OCI-LY7 (cell line): ENCODE measurements at regions of chr18 and their contacts with region 1.

Region 1: GRCh38 chr18:42298759-42299675 is 344.0 kb downstream of the PIK3C3 start:
- DNase-seq: peak; percentile 37
- H3K4me3 ChIP-seq: no peak overlapping the region
- H3K27ac ChIP-seq: no peak overlapping the region
- H3K4me1 ChIP-seq: no peaks in the 10 kb centered on the region
- CTCF ChIP-seq: peak; percentile 79

Region 2: GRCh38 chr18:42114310-42114943 is 184.6 kb before region 1 on chr18:
- CTCF ChIA-PET with region 1: no interaction called
- POLR2A ChIA-PET with region 1: no interaction called
- intact Hi-C with region 1: loop called (anchors 10 kb)
- DNase-seq: peak; percentile 46
- H3K4me3 ChIP-seq: no peak overlapping the region
- H3K27ac ChIP-seq: no peak overlapping the region
- H3K4me1 ChIP-seq: no peaks in the 10 kb centered on the region
- CTCF ChIP-seq: peak; percentile 79

Region 3: DNA sequence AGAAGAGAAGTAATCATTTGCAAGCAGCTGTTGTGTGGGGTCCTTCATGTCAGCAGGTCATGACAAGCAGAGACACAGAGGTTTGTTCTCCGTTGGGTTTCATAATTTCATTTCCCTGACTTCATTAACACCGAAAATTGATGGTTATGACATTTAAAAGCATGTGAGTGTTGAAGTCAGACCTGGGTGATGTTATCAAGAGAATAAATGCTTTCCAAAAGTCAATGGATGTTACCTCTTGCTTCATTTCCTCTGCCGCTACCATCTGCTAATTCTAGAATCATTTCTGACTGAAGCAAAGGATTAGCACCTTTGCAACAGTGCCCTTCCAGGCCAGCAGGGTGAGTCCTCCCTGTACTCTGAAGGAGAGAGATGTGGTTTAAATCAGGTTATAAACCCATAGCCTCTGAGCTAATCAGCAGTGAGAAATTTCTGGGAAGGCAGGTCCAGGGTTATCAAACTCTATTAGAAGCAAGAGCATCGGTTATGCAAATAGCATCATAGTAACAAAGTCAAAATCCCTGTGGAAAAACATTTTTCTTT is 102.2 kb after region 1 on chr18:
- CTCF ChIA-PET with region 1: no interaction called
- POLR2A ChIA-PET with region 1: no interaction called
- intact Hi-C with region 1: no loop called
- DNase-seq: no peak
- H3K4me3 ChIP-seq: no peak overlapping the region
- H3K27ac ChIP-seq: no peak overlapping the region
- H3K4me1 ChIP-seq: no peaks in the 10 kb centered on the region
- CTCF ChIP-seq: no peak

Region 4: DNA sequence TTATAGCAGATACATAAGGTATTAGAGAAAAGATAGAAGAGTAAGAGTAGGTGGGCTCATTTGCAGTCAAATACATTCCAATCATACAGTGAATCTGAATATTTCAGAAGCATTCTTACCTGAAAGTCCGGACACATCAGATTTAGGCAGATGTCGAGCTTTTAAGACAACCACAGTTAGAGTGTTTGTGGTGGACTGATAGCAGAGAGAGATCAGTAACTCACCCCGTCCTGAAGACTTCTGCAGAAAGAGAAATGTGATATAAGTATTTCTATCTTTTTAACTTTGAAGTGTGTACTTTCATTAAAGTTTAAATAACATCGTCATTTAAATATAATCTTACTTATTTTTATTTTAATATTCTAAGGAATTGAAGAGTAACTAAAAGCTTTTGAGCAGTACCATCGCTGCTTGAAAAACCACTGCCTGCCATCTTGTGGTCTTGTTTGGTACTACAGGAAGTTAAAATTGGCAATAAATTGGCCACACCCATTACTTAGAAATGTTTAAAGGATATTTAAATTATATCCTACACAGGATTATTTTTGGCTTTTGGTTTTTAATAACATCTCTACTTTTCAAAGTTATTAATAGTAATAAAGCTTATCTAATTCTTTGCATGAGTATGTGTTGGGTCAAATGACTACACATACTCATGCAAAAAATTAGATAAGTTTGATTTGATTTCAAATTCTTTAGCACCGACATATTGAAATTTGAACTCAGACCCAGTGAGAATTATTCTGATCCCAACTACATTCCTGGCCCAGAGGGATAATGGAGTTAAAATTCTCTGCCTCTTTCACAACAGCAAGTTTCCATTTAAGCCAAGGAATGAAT is 972.8 kb after region 1 on chr18:
- CTCF ChIA-PET with region 1: no interaction called
- POLR2A ChIA-PET with region 1: no interaction called
- intact Hi-C with region 1: loop called (anchors 5 kb)
- DNase-seq: peak; percentile 16
- H3K4me3 ChIP-seq: no peak overlapping the region
- H3K27ac ChIP-seq: no peak overlapping the region
- H3K4me1 ChIP-seq: no peaks in the 10 kb centered on the region
- CTCF ChIP-seq: peak; percentile 70